Upper lobe of right lung (tissue), 1 donor: ENCODE measurements at regions of chrX and their contacts with region 1.

Region 1: DNA sequence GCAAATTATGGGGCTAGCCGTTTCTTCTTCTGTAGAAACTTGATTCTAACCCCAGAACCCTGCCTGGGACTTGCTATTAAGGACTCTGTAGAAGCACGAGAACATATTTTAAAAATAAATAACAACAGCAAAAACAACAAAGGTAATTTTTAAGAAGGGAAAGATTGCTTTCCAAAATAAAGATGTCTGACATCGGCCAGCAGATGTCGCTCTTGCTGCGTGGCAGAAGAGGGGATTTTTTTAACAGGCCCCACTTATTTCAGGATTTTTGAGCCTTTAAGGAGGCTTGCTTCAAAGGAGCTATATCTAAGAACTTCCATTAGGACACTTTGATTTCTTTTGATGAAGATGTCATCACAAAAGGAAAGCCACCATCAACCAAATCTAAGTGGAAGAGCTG is 62.8 kb upstream of the EGFL6 start:
- DNase-seq: no peak
- ATAC-seq: no peak
- H3K4me3 ChIP-seq: no peak overlapping the region
- H3K27ac ChIP-seq: no peak overlapping the region
- H3K4me1 ChIP-seq: no peaks in the 10 kb centered on the region
- H3K27me3 ChIP-seq: no peaks in the 10 kb centered on the region
- CTCF ChIP-seq: peak; percentile 70

Region 2: GRCh38 chrX:14029425-14030173 is 523.0 kb after region 1 on chrX and contains the start of gene GEMIN8:
- intact Hi-C with region 1: loop called (anchors 5 kb)
- DNase-seq: peak; percentile 94
- ATAC-seq: peak; percentile 98
- H3K4me3 ChIP-seq: peak within 1 kb of the TSS; percentile 65
- H3K27ac ChIP-seq: peak within 1 kb of the TSS; percentile 92
- H3K4me1 ChIP-seq: peaks cover 6% of the 10 kb centered on the region
- H3K27me3 ChIP-seq: no peaks in the 10 kb centered on the region
- CTCF ChIP-seq: no peak
- total RNA-seq, gene GEMIN8: 16.4 TPM